Activated B cell treated with CpG ODN at 0.5 μM for 24 hours (primary cell): ENCODE measurements at regions of chr2 and their contacts with region 1.

Region 1: GRCh38 chr2:192016265-192016664 is 169.4 kb upstream of the CAVIN2 start:
- DNase-seq: no peak
- ATAC-seq: no peak
- H3K4me3 Mint-ChIP-seq: no peak overlapping the region
- H3K27ac Mint-ChIP-seq: no peak overlapping the region
- H3K4me1 Mint-ChIP-seq: no peaks in the 10 kb centered on the region
- H3K27me3 Mint-ChIP-seq: no peaks in the 10 kb centered on the region
- CTCF ChIP-seq: no peak

Region 2: DNA sequence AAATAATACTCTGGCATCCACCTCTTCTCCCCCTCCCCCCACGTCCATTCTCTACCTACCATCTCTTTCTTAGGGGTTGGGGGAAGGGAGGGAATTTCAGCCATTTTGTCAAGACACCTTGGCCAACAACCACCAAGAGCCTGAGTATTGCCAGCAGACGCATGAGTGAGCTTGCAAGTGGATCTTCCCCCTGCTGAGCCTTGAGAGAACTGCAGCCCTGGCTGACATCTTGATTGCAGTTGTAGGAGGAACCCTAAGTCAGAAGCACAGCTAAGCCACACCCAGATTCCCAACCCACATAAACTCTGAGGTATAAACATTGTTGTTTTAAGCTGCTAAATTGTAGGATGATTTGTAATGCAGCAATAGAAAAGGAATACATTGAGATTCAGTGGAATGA is 12.8 kb after region 1 on chr2:
- CTCF ChIA-PET with region 1: no interaction called
- POLR2A ChIA-PET with region 1: no interaction called
- intact Hi-C with region 1: loop called (anchors 1 kb)
- DNase-seq: no peak
- ATAC-seq: no peak
- H3K4me3 Mint-ChIP-seq: no peak overlapping the region
- H3K27ac Mint-ChIP-seq: no peak overlapping the region
- H3K4me1 Mint-ChIP-seq: no peaks in the 10 kb centered on the region
- H3K27me3 Mint-ChIP-seq: peaks cover 3% of the 10 kb centered on the region
- CTCF ChIP-seq: no peak

Region 3: DNA sequence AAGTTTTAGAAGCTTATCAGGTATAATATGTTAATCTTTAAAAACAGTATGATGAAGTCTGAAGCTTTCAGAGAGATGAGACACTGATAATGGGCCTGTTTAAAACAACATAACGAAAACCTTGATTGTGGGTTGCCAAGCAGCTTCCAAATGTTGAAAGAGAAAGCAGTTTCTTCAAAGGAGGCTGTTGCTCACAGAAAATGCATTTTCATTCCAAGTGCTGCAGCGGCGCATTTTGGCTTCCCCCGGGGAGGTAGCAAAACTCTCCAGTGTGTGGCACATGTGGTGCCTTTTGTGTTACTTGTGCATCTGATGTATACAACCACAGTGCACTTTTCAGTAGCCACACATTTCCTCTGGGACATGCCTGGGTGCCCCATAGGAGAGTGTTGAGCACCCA is 112.4 kb after region 1 on chr2:
- CTCF ChIA-PET with region 1: no interaction called
- POLR2A ChIA-PET with region 1: no interaction called
- intact Hi-C with region 1: no loop called
- DNase-seq: no peak
- ATAC-seq: no peak
- H3K4me3 Mint-ChIP-seq: no peak overlapping the region
- H3K27ac Mint-ChIP-seq: no peak overlapping the region
- H3K4me1 Mint-ChIP-seq: no peaks in the 10 kb centered on the region
- H3K27me3 Mint-ChIP-seq: no peaks in the 10 kb centered on the region
- CTCF ChIP-seq: no peak